CD8-positive, alpha-beta T cell (primary cell): ENCODE measurements at regions of chr20 and their contacts with region 1.

Region 1: DNA sequence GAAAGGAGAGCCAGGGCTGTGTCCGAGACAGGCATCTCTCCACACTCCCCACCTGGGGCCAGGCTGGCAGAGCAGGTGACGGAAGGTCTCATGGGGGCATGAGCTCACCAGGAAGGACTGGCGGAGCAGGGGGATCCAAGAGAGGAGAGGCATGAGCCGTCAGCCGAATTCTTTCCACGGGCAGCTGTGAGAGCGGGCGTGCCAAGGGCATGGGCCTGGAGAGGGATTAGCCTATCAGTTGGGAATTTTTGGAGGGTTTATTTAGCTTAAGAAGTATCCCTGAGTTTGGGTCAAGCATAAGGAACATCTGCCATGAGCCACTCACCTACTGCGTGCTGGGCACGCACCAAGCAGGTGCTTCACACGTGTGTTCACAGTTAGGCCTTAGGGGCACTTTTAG is 60.2 kb upstream of the ZNFX1 start:
- DNase-seq: no peak
- ATAC-seq: no peak
- H3K4me3 ChIP-seq: no peak overlapping the region
- H3K4me3 Mint-ChIP-seq: no peak overlapping the region
- H3K27ac ChIP-seq: no peak overlapping the region
- H3K27ac Mint-ChIP-seq: no peak overlapping the region
- H3K4me1 ChIP-seq: no peaks in the 10 kb centered on the region
- H3K4me1 Mint-ChIP-seq: no peaks in the 10 kb centered on the region
- H3K27me3 ChIP-seq: peaks cover 3% of the 10 kb centered on the region in 2 experiments
- H3K27me3 Mint-ChIP-seq: peaks cover 5% of the 10 kb centered on the region
- CTCF ChIP-seq: no peak

Region 2: DNA sequence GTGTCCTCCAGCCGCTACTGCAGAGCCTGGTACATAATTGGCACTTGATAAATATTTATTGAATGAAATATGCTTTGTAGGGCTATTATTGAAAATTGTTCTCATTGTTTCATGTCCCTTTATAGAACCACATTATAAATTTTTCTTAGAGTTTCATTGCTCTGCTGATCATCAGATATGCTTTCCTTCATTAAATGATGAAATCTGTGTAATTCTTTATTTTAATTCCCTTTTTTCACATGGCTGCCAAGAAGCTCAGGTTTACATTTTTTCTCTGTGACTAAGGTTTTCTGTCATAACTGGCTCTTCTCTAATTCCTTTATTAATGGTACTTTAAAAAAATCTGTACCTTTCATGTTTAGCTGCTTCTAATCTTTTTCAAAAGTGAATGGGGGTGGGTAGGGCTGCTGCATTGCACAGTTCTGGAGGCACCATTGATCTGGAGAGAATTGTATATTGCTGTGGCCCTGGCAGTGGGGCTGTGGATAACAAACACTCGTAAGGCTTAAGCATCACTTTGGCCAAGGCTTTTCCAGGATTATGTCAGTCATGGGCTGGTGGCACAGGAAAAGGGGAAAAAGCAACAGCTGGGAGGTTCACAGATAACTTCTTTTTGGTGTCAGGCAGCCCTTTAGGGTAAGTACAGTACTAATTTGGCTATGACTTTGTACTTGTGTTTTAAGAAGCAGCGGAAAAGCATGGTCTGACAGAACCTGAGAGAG is 372.7 kb before region 1 on chr20:
- CTCF ChIA-PET with region 1: no interaction called
- POLR2A ChIA-PET with region 1: no interaction called
- intact Hi-C with region 1: no loop called
- DNase-seq: no peak
- ATAC-seq: no peak
- H3K4me3 ChIP-seq: no peak overlapping the region
- H3K4me3 Mint-ChIP-seq: no peak overlapping the region
- H3K27ac ChIP-seq: no peak overlapping the region
- H3K27ac Mint-ChIP-seq: no peak overlapping the region
- H3K4me1 ChIP-seq: no peaks in the 10 kb centered on the region
- H3K4me1 Mint-ChIP-seq: no peaks in the 10 kb centered on the region
- H3K27me3 ChIP-seq: no peaks in the 10 kb centered on the region
- H3K27me3 Mint-ChIP-seq: no peaks in the 10 kb centered on the region
- CTCF ChIP-seq: no peak

Region 3: GRCh38 chr20:49424536-49424935 is 86.5 kb after region 1 on chr20:
- CTCF ChIA-PET with region 1: no interaction called
- POLR2A ChIA-PET with region 1: no interaction called
- intact Hi-C with region 1: no loop called
- DNase-seq: no peak
- ATAC-seq: no peak
- H3K4me3 ChIP-seq: no peak overlapping the region
- H3K4me3 Mint-ChIP-seq: no peak overlapping the region
- H3K27ac ChIP-seq: no peak overlapping the region
- H3K27ac Mint-ChIP-seq: no peak overlapping the region
- H3K4me1 ChIP-seq: no peaks in the 10 kb centered on the region
- H3K4me1 Mint-ChIP-seq: no peaks in the 10 kb centered on the region
- H3K27me3 ChIP-seq: no peaks in the 10 kb centered on the region
- H3K27me3 Mint-ChIP-seq: peaks cover 11% of the 10 kb centered on the region
- CTCF ChIP-seq: no peak

Region 4: DNA sequence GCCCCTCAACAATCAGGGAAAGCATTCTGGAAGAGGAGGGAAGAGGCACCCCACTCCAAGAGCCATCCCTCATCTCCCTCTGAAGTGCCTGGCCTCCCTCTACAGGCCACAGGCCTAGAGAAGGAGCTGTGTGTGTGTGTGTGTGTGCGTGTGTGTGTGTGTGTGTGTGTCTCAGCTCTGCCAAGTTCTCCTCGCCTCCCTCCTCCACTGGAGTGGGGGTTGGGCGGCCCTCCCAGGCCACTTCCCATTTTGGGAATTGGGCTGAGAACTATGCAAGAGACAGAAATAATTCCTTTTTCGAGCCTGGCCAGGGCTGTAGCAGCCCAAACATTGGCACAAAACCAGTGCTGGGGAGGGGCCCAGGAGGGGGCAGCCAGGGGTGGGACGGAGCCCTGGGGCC is 108.7 kb after region 1 on chr20:
- CTCF ChIA-PET with region 1: no interaction called
- POLR2A ChIA-PET with region 1: no interaction called
- intact Hi-C with region 1: no loop called
- DNase-seq: no peak
- ATAC-seq: no peak
- H3K4me3 ChIP-seq: no peak overlapping the region
- H3K4me3 Mint-ChIP-seq: no peak overlapping the region
- H3K27ac ChIP-seq: no peak overlapping the region
- H3K27ac Mint-ChIP-seq: no peak overlapping the region
- H3K4me1 ChIP-seq: no peaks in the 10 kb centered on the region
- H3K4me1 Mint-ChIP-seq: no peaks in the 10 kb centered on the region
- H3K27me3 ChIP-seq: no peaks in the 10 kb centered on the region
- H3K27me3 Mint-ChIP-seq: peaks cover 43% of the 10 kb centered on the region
- CTCF ChIP-seq: no peak

Region 5: GRCh38 chr20:49508435-49509199 is 170.6 kb after region 1 on chr20:
- CTCF ChIA-PET with region 1: interaction called, 8 read pairs
- POLR2A ChIA-PET with region 1: no interaction called
- intact Hi-C with region 1: loop called in 1 of 2 experiments (anchors 1 kb)
- DNase-seq: peak in 2 of 9 experiments; percentile 44 to 54
- ATAC-seq: peak; percentile 52
- H3K4me3 ChIP-seq: no peak overlapping the region
- H3K4me3 Mint-ChIP-seq: no peak overlapping the region
- H3K27ac ChIP-seq: no peak overlapping the region
- H3K27ac Mint-ChIP-seq: no peak overlapping the region
- H3K4me1 ChIP-seq: no peaks in the 10 kb centered on the region
- H3K4me1 Mint-ChIP-seq: no peaks in the 10 kb centered on the region
- H3K27me3 ChIP-seq: peaks cover 0 to 3% of the 10 kb centered on the region in 2 experiments
- H3K27me3 Mint-ChIP-seq: peaks cover 29% of the 10 kb centered on the region
- CTCF ChIP-seq: peak; percentile 18

Region 6: DNA sequence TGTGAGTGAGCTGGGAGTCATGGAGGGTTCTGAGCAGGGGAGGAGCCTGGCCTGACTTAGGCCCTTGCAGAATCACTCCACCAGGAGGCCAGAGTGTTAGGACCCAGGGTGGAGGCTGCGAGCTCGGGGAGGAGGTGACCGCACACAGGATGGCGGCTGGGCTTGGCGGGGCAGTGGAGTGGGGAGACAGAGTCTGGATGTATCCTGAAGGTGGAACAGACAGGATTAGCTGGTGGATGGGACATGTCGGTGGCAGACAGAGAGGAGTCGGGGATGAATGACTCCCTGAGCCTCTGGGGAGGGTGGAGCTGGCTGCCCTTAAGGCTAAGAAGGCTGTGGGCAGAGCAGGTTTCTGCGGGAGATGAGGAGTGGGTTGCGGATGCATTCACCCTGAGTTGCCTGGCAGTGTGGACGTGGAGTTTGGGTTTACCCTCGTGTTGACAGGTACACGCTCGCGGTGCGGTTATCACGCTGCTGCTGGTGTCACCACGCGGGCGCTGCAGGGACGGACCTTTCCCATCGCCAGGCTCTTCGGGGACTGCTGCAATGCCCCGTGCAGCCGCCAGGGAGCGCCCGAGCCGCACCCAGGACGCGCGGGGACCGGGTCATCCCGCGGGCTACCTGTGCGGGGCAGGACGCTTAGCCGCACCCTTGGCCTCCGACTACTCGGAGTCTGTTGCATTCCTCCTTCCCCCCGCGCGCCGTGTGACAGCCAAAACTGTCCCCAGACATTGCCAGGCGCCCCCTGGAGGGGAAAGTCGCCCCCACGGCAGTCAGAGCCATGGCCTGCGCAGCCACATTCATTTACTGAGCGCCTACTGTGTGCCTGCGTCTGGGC is 272.9 kb after region 1 on chr20:
- CTCF ChIA-PET with region 1: interaction called, 3 read pairs
- POLR2A ChIA-PET with region 1: no interaction called
- intact Hi-C with region 1: loop called in 1 of 2 experiments (anchors 1 kb)
- DNase-seq: peak; percentile 52 to 83 (median 69)
- ATAC-seq: peak; percentile 74
- H3K4me3 ChIP-seq: no peak overlapping the region
- H3K4me3 Mint-ChIP-seq: peak overlapping the region; percentile 38
- H3K27ac ChIP-seq: no peak overlapping the region
- H3K27ac Mint-ChIP-seq: peak overlapping the region; percentile 13
- H3K4me1 ChIP-seq: peaks cover 5% of the 10 kb centered on the region
- H3K4me1 Mint-ChIP-seq: peaks cover 13% of the 10 kb centered on the region
- H3K27me3 ChIP-seq: no peaks in the 10 kb centered on the region
- H3K27me3 Mint-ChIP-seq: peaks cover 10% of the 10 kb centered on the region
- CTCF ChIP-seq: peak; percentile 93

Region 7: GRCh38 chr20:49888345-49888966 is 550.4 kb after region 1 on chr20:
- CTCF ChIA-PET with region 1: no interaction called
- POLR2A ChIA-PET with region 1: no interaction called
- intact Hi-C with region 1: loop called in 1 of 2 experiments (anchors 2 kb)
- DNase-seq: peak; percentile 31 to 68 (median 58)
- ATAC-seq: peak; percentile 64
- H3K4me3 ChIP-seq: no peak overlapping the region
- H3K4me3 Mint-ChIP-seq: no peak overlapping the region
- H3K27ac ChIP-seq: no peak overlapping the region
- H3K27ac Mint-ChIP-seq: no peak overlapping the region
- H3K4me1 ChIP-seq: no peaks in the 10 kb centered on the region
- H3K4me1 Mint-ChIP-seq: peaks cover 2% of the 10 kb centered on the region
- H3K27me3 ChIP-seq: no peaks in the 10 kb centered on the region
- H3K27me3 Mint-ChIP-seq: no peaks in the 10 kb centered on the region
- CTCF ChIP-seq: peak; percentile 66